Psoas muscle (tissue), 8 donors: ENCODE measurements at regions of chr1 and their contacts with region 1.

Region 1: DNA sequence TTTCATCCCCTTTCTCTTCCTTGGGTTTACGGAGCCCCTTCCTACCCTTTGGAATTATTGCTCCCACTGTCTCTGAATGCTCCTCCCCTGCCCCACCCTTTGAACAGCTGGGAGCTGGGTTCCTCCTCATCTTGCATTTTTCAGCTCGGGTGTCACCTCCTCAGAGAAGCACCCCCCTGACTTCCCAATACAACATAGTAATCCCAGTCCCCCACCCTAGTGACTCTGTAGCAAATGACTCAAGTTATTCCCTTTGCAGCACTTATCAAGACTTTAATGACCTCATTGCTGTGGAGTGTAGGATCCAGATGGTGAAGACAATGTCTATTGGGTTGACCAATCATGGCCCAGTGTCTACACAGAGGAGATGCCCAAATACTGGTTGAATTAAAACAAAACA is 8.9 kb upstream of the VWA5B1 start:
- DNase-seq: no peak
- ATAC-seq: no peak
- H3K4me3 ChIP-seq: no peak overlapping the region
- H3K27ac ChIP-seq: no peak overlapping the region
- H3K4me1 ChIP-seq: peaks cover 9% of the 10 kb centered on the region
- H3K27me3 ChIP-seq: no peaks in the 10 kb centered on the region
- CTCF ChIP-seq: no peak

Region 2: DNA sequence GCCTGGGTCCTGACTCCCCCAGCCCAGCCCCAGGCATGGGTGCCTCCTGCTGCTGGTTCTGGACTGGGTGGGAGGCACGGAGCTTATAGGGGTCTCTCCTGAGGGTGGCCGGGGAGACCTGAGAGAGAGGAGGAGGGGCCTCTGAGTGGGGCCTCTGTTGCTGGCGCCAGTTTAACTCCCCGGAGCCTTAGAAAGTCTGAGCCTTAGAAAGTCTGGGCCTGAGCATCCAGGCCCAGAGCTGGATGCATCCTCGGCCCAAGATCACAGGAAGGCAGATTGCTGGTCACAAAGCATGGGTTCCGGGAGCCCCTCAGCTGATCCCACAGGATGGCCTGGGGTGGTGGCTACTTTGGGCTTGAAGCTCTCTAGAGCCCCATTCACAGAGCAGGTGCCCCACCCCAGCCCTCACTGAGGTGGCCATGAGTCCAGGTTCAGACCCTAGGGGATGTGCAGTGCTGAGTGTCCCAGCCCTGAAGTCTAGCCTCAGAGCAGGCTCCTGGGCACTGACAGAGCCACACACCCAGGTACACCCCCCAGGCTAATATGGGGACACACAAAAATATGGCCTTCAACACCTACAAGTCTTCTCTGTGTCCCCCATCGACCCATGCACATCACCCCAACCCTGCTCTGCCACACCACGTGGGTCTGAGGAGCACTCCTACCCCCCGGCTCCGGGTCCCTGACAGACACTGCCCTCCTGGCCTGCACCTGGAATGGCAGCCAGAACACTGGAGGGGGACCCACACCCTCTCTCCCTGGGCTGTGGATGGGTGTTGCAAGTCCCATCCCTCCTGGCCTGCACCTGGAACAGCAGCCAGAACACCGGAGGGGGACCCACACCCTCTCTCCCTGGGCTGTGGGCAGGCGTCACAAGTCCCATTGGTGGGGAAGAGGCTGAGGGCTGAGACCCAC is 133.0 kb before region 1 on chr1:
- intact Hi-C with region 1: no loop called
- DNase-seq: no peak
- ATAC-seq: no peak
- H3K4me3 ChIP-seq: no peak overlapping the region
- H3K27ac ChIP-seq: no peak overlapping the region
- H3K4me1 ChIP-seq: peaks cover 5% of the 10 kb centered on the region
- H3K27me3 ChIP-seq: peaks cover 0 to 21% (median 0%) of the 10 kb centered on the region in 3 donors
- CTCF ChIP-seq: no peak

Region 3: DNA sequence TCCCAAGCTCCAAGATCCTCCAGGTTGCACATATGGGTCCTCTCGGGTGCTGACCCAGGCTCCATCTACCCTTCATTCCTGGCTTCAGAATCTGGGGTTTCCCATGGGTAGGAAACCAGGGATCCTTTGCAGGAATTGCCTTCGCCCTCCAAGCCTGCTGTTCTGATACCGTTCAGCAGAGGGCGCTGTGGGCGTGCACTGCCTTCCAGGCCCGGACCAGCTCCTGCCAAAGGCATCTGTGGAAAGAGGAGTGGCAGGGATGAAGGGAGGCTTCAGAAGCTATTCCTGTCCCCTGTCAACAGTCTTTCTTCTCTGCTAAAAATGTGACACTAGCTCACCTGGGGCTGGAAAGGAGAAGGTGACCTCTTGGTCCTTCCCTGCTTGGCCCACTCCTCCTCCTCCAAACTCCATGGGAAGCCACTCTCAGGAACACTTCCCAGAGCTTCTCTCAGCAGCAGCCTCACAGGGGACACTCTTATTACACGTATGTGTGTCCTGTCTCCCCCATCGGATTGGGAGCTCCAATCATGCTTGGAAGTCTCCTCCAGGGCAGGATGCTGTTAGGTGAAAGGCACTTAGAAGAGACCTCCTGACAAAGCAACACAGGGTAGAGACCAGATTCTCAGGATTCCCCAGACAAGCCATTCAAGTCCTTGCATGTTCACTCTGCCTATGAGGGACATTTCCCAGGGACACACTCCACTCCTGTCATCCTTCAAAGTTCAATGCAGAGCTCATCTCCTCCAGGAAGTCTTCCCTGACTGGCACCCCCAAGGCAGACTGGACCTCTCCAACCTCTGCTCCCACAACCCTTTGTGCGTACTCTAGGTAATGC is 80.2 kb after region 1 on chr1:
- intact Hi-C with region 1: loop called in 1 of 2 experiments (anchors 5 kb)
- DNase-seq: peak; percentile 65 to 82
- ATAC-seq: peak; percentile 44 to 66 (median 47)
- H3K4me3 ChIP-seq: no peak overlapping the region
- H3K27ac ChIP-seq: no peak overlapping the region
- H3K4me1 ChIP-seq: peaks cover 24% of the 10 kb centered on the region
- H3K27me3 ChIP-seq: peaks cover 0 to 22% (median 5%) of the 10 kb centered on the region in 3 donors
- CTCF ChIP-seq: peak; percentile 69